Activated CD4-positive, alpha-beta T cell treated with anti-CD3 and anti-CD28 coated beads for 36 hours (primary cell): ENCODE measurements at regions of chr17 and their contacts with region 1.

Region 1: GRCh38 chr17:27892866-27893769 is at the start of gene LYRM9:
- DNase-seq: peak; percentile 96
- ATAC-seq: peak; percentile 96
- H3K4me3 Mint-ChIP-seq: peak within 1 kb of the TSS; percentile 76
- H3K27ac Mint-ChIP-seq: peak within 1 kb of the TSS; percentile 63
- H3K4me1 Mint-ChIP-seq: peaks cover 21% of the 10 kb centered on the region
- H3K27me3 Mint-ChIP-seq: peaks cover 17% of the 10 kb centered on the region
- total RNA-seq, gene LYRM9: 5.9 to 6.3 TPM

Region 2: GRCh38 chr17:27293898-27294688 is 599.0 kb before region 1 on chr17 and contains the start of gene WSB1:
- CTCF ChIA-PET with region 1: no interaction called
- POLR2A ChIA-PET with region 1: no interaction called
- intact Hi-C with region 1: loop called in 1 of 2 experiments (anchors 5 kb)
- DNase-seq: peak; percentile 96
- ATAC-seq: peak; percentile 86
- H3K4me3 Mint-ChIP-seq: peak within 1 kb of the TSS; percentile 89
- H3K27ac Mint-ChIP-seq: peak within 1 kb of the TSS; percentile 99
- H3K4me1 Mint-ChIP-seq: peaks cover 32% of the 10 kb centered on the region
- H3K27me3 Mint-ChIP-seq: no peaks in the 10 kb centered on the region
- total RNA-seq, gene WSB1: 145 to 190 TPM

Region 3: GRCh38 chr17:27873760-27874159 is 19.4 kb before region 1 on chr17:
- CTCF ChIA-PET with region 1: interaction called, 31 read pairs
- POLR2A ChIA-PET with region 1: no interaction called
- intact Hi-C with region 1: no loop called
- DNase-seq: no peak
- ATAC-seq: no peak
- H3K4me3 Mint-ChIP-seq: no peak overlapping the region
- H3K27ac Mint-ChIP-seq: no peak overlapping the region
- H3K4me1 Mint-ChIP-seq: peaks cover 5% of the 10 kb centered on the region
- H3K27me3 Mint-ChIP-seq: no peaks in the 10 kb centered on the region

Region 4: GRCh38 chr17:28041068-28041843 is 148.1 kb after region 1 on chr17:
- CTCF ChIA-PET with region 1: interaction called, 3 read pairs
- POLR2A ChIA-PET with region 1: interaction called, 5 read pairs
- intact Hi-C with region 1: loop called (anchors 1 to 10 kb)
- DNase-seq: peak; percentile 100
- ATAC-seq: peak; percentile 96
- H3K4me3 Mint-ChIP-seq: peak overlapping the region; percentile 79
- H3K27ac Mint-ChIP-seq: peak overlapping the region; percentile 74
- H3K4me1 Mint-ChIP-seq: peaks cover 52% of the 10 kb centered on the region
- H3K27me3 Mint-ChIP-seq: no peaks in the 10 kb centered on the region

Region 5: DNA sequence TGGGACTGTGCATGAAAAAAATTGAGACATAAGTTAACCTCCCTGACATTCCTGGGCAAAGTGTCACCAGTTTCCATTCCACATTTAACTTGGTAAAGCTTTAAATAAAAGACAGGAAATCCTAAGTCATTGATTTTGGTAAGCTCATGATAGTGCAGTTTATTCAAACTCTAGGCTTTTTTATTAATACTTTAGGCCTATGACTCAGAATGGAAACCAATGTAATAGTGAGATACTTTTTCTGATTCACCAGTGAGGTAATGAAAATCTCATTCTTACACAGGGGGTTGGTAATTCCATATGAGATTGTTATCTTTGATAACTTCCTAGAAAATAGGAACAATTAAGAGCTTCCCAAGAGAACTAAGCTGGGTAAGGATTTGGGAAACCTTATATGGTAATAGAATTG is 240.4 kb after region 1 on chr17:
- CTCF ChIA-PET with region 1: no interaction called
- POLR2A ChIA-PET with region 1: no interaction called
- intact Hi-C with region 1: no loop called
- DNase-seq: no peak
- ATAC-seq: peak; percentile 58
- H3K4me3 Mint-ChIP-seq: no peak overlapping the region
- H3K27ac Mint-ChIP-seq: no peak overlapping the region
- H3K4me1 Mint-ChIP-seq: peaks cover 10% of the 10 kb centered on the region
- H3K27me3 Mint-ChIP-seq: no peaks in the 10 kb centered on the region

Region 6: GRCh38 chr17:28318759-28319660 is 425.9 kb after region 1 on chr17 and contains the start of gene TMEM97:
- CTCF ChIA-PET with region 1: no interaction called
- POLR2A ChIA-PET with region 1: no interaction called
- intact Hi-C with region 1: loop called in 1 of 2 experiments (anchors 2 kb)
- DNase-seq: peak; percentile 98
- ATAC-seq: peak; percentile 99
- H3K4me3 Mint-ChIP-seq: peak within 1 kb of the TSS; percentile 96
- H3K27ac Mint-ChIP-seq: peak within 1 kb of the TSS; percentile 88
- H3K4me1 Mint-ChIP-seq: peaks cover 30% of the 10 kb centered on the region
- H3K27me3 Mint-ChIP-seq: no peaks in the 10 kb centered on the region
- total RNA-seq, gene TMEM97: 31.0 to 49.3 TPM